ENCODE measurements at regions of chr19 and their contacts with region 1.

Region 1: GRCh38 chr19:17245244-17245984 is at the start of gene NR2F6:
- DNase-seq: no peak
- ATAC-seq: no peak
- H3K4me3 ChIP-seq: peak within 1 kb of the TSS; percentile 87 to 92 (median 89)
- H3K27ac ChIP-seq: peak within 1 kb of the TSS; percentile 95
- H3K4me1 ChIP-seq: peaks cover 73% of the 10 kb centered on the region
- H3K27me3 ChIP-seq: no peaks in the 10 kb centered on the region
- CTCF ChIP-seq: no peak
- EP300 ChIP-seq: no peak
- POLR2A ChIP-seq: peak in 1 of 2 experiments; percentile 73; a peak in 3 of 4 replicates
- RAD21 ChIP-seq: peak; percentile 19; the same call in 1 of the 2 replicates
- total RNA-seq, gene NR2F6: 54.1 and 72.4 TPM in 2 replicates

Region 2: DNA sequence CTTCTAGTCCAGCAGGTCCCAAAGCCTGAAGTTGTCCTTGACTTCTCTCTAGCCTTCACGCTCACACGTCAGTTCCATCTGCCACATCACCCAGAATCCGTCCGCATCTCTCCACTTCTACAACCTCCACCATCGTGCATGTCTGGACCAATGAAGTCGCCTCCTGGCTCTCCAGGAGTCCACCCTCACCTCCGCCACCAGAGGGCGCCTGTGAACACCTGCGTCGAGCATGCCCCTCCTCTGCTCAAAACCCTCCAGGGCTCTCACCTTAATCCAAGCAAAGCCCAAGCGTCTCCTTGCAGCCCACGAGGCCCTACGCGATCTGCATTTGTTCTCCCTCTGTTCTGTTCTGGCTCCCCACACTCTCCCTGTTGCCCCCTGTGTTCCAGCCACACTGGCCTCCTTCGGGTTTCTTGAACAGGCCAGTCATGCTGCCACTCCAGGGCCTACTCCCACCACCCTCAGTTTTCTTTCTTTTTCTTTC is 15.5 kb after region 1 on chr19:
- CTCF ChIA-PET with region 1: no interaction called
- POLR2A ChIA-PET with region 1: interaction called, 28 read pairs
- in situ Hi-C with region 1: no loop called
- intact Hi-C with region 1: loop called (anchors 2 kb)
- DNase-seq: peak; percentile 82
- ATAC-seq: peak; percentile 94
- H3K4me3 ChIP-seq: peak overlapping the region in 2 of 3 experiments; percentile 8 to 59; a peak in 1 of 6 replicates
- H3K27ac ChIP-seq: no peak overlapping the region
- H3K4me1 ChIP-seq: peaks cover 61% of the 10 kb centered on the region
- H3K27me3 ChIP-seq: no peaks in the 10 kb centered on the region
- CTCF ChIP-seq: peak; percentile 94
- EP300 ChIP-seq: no peak
- POLR2A ChIP-seq: no peak
- RAD21 ChIP-seq: peak; percentile 76

Region 3: DNA sequence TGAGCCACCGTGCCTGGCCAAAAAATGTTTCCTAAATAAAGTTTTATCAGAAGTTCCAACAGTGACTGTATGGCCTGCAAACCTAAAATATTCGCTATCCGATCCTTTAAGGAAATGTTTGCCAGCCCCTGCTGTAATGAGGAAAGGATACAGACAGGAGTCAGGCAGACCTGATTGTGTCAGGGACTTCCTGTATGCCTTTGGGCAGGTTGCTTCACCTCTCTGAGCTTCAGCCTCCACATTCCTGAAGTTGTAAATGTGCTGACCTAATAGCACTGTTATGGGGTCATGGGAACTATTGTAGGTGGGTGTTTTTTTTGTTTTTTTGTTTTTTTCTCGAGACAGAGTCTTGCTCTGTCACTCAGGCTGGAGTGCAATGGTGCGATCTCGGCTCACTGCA is 51.6 kb after region 1 on chr19:
- CTCF ChIA-PET with region 1: no interaction called
- POLR2A ChIA-PET with region 1: no interaction called
- in situ Hi-C with region 1: no loop called
- intact Hi-C with region 1: no loop called
- DNase-seq: no peak
- ATAC-seq: no peak
- H3K4me3 ChIP-seq: no peak overlapping the region
- H3K27ac ChIP-seq: no peak overlapping the region
- H3K4me1 ChIP-seq: peaks cover 2% of the 10 kb centered on the region
- H3K27me3 ChIP-seq: no peaks in the 10 kb centered on the region
- CTCF ChIP-seq: no peak
- EP300 ChIP-seq: no peak
- POLR2A ChIP-seq: no peak
- RAD21 ChIP-seq: no peak

Region 4: GRCh38 chr19:17358395-17358794 is 113.0 kb after region 1 on chr19:
- CTCF ChIA-PET with region 1: no interaction called
- POLR2A ChIA-PET with region 1: no interaction called
- in situ Hi-C with region 1: no loop called
- intact Hi-C with region 1: no loop called
- DNase-seq: no peak
- ATAC-seq: 0 out of 3 replicates have a peak, but pooled peaks have one; percentile 41
- H3K4me3 ChIP-seq: no peak overlapping the region
- H3K27ac ChIP-seq: no peak overlapping the region
- H3K4me1 ChIP-seq: peaks cover 24% of the 10 kb centered on the region
- H3K27me3 ChIP-seq: peaks cover 3 to 11% of the 10 kb centered on the region in 2 experiments; a peak in 3 of 5 replicates
- CTCF ChIP-seq: no peak
- EP300 ChIP-seq: no peak
- POLR2A ChIP-seq: no peak
- RAD21 ChIP-seq: no peak